Sigmoid colon (tissue), 7 donors: ENCODE measurements at regions of chr16 and their contacts with region 1.

Region 1: DNA sequence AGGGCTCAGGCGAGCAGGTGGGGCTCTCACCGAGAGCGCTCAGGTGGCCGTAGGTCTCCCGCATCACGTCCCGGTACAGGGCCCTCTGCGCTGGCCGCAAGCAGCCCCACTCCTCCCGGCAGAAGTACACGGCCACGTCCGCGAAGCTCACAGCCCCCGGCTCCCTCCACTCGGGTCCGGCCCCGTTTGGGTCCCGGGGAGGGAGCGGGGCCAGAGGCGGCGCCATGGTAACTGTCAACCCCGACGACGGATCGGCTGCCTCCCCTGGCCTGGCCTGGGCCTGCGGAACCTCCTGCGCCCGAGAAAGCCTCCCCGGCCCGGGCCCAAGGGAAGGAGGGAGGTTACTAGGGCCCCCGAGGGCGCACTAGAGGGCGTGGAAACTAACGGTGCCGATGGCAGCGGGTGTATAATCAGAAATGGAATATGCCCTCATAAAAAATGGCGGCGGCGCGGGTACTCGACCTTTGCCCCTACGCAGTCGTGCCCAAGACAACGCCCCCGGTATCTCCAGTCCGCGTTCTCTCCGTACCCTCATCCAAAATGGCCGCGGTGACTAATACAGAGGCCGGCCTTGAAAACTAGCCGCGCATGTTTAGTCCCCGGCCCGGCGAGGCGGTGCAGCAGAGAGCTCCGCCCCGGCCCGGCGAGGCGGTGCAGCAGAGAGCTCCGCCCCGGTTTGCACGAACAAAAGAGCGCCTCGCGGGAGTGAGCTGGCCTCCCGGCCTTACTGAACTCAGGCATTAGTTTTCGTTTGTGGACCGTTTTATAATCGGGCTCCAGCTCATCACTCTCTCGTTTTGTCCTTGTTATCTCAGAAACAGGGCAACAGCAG is at the start of gene ZNF764:
- DNase-seq: peak; percentile 99
- H3K4me3 ChIP-seq: peak within 1 kb of the TSS; percentile 49 to 87 (median 84)
- H3K27ac ChIP-seq: peak within 1 kb of the TSS; percentile 89 to 98 (median 96)
- H3K4me1 ChIP-seq: peaks cover 0 to 32% (median 28%) of the 10 kb centered on the region in 4 donors
- H3K27me3 ChIP-seq: no peaks in the 10 kb centered on the region
- CTCF ChIP-seq: no peak
- EP300 ChIP-seq: no peak
- POLR2A ChIP-seq: peak in 1 of 2 donors; percentile 22
- total RNA-seq, gene ZNF764: 6.1 to 8.6 (median 8.1) TPM

Region 2: GRCh38 chr16:30519120-30520049 is 38.8 kb before region 1 on chr16:
- intact Hi-C with region 1: no loop called
- DNase-seq: no peak
- H3K4me3 ChIP-seq: no peak overlapping the region
- H3K27ac ChIP-seq: no peak overlapping the region
- H3K4me1 ChIP-seq: peaks cover 0 to 5% (median 0%) of the 10 kb centered on the region in 4 donors
- H3K27me3 ChIP-seq: no peaks in the 10 kb centered on the region
- CTCF ChIP-seq: no peak
- EP300 ChIP-seq: no peak
- POLR2A ChIP-seq: no peak

Region 3: GRCh38 chr16:30534368-30535105 is 23.6 kb before region 1 on chr16 and contains the start of gene ZNF747:
- intact Hi-C with region 1: loop called (anchors 1 kb)
- DNase-seq: peak; percentile 97
- H3K4me3 ChIP-seq: peak within 1 kb of the TSS; percentile 45 to 85 (median 66)
- H3K27ac ChIP-seq: peak within 1 kb of the TSS; percentile 89 to 97 (median 94)
- H3K4me1 ChIP-seq: peaks cover 0 to 31% (median 25%) of the 10 kb centered on the region in 4 donors
- H3K27me3 ChIP-seq: no peaks in the 10 kb centered on the region
- CTCF ChIP-seq: no peak
- EP300 ChIP-seq: no peak
- POLR2A ChIP-seq: peak; percentile 50 to 65
- total RNA-seq, gene ZNF747: 10.3 to 15.5 (median 13.1) TPM

Region 4: GRCh38 chr16:30585400-30586189 is 27.4 kb after region 1 on chr16 and contains the start of gene ZNF785:
- intact Hi-C with region 1: loop called (anchors 1 kb)
- DNase-seq: peak; percentile 99
- H3K4me3 ChIP-seq: peak within 1 kb of the TSS; percentile 59 to 88 (median 70)
- H3K27ac ChIP-seq: peak within 1 kb of the TSS; percentile 91 to 94 (median 94)
- H3K4me1 ChIP-seq: peaks cover 0 to 29% (median 28%) of the 10 kb centered on the region in 4 donors
- H3K27me3 ChIP-seq: no peaks in the 10 kb centered on the region
- CTCF ChIP-seq: no peak
- EP300 ChIP-seq: no peak
- POLR2A ChIP-seq: no peak
- total RNA-seq, gene ZNF785: 5.9 to 19.9 (median 7.9) TPM